ENCODE measurements at regions of chr6 and their contacts with region 1.

Region 1: GRCh38 chr6:31907158-31907813 is 5.4 kb upstream of the ZBTB12 start:
- DNase-seq: no peak
- ATAC-seq: no peak
- H3K4me3 ChIP-seq: no peak overlapping the region
- H3K27ac ChIP-seq: no peak overlapping the region
- H3K4me1 ChIP-seq: peaks cover 39% of the 10 kb centered on the region
- H3K27me3 ChIP-seq: no peaks in the 10 kb centered on the region
- CTCF ChIP-seq: no peak

Region 2: DNA sequence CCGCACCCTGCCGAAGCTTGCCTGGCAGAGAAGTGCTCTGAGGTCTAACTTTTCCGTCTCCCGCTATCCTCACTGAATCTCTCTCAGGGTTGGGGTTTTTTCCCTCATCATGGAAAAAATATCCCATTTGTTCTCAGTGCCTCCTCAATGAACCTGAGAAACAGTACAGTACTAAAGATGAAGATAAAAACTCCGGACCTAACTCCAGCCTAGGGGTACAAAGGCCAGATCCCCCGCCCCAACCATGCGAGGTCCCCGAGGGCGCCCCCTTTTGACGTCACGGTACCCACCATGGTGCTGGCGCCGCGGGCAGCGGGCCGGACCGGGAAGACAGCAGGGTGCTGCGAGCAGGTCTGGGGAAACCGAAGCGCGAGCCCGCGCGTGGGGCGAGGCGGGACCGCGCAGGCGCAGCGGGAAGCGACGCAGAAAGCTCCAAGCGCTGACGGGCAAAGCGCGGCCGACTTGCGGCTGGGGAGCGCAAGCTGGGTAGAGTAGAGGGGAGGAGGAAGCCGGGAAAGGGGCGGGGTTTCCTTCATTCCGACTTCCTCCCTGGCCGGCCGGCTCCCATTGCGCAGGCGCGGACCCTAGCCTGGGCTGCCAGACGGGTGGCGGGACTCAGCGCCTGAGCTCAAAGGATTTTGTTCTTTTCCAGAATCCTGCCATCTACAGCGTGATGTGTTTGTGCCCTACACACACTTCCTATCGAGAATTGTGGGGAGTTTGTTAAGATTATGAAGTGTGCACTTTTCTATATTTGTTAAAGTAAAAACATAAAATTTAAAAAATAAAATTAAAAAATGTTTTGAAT is 100.6 kb before region 1 on chr6 and contains the start of gene LSM2:
- CTCF ChIA-PET with region 1: no interaction called
- POLR2A ChIA-PET with region 1: no interaction called
- intact Hi-C with region 1: no loop called
- DNase-seq: peak; percentile 96
- ATAC-seq: peak; percentile 99
- H3K4me3 ChIP-seq: peak within 1 kb of the TSS; percentile 73
- H3K27ac ChIP-seq: peak within 1 kb of the TSS; percentile 53
- H3K4me1 ChIP-seq: peaks cover 6% of the 10 kb centered on the region
- H3K27me3 ChIP-seq: no peaks in the 10 kb centered on the region
- CTCF ChIP-seq: peak; percentile 55
- total RNA-seq, gene LSM2: 93.7 and 143 TPM in 2 replicates

Region 3: DNA sequence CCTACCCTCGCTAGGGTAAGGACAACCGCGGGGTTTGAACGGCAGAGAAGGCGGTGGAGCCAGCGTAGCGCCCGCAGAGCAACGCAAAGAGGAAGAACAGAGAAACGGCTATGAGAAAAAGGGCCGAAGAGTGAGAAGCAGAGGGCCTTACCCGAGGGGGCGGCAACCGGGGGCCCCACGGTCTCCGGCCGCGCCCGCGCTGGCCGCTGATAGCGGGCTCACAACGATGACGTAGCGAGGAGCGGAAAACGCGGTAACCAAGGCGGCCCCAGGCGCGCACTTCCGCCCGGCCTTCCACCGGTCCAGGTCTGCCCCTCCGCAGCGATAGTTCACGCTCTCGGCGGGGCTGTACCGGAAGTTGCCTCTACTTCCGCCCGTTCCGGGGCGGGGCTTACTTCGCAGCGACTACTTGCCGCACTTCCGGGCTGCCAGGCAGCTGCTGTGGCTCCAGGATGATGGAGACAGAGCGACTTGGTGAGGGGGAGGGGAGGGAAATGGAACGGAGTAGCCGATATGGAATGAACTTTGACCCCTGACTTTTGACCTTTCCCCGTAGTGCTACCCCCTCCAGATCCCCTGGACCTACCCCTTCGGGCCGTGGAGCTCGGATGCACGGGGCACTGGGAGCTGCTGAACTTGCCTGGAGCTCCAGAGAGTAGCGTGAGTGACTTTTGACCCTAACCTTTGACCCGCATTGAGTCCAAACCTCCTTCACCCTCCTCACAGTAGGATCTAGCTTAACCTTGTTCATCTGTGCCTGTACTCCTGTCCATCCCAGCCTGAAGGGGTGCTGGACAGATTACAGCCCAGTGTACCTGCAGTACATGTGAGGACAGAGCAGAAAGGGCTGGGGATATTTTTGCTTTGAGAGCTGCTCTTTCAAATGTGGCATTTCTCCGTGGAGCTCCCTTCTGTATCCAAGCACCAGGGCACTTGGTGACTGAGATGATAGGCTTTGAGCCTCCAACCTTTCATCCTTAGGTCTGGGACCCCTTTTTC is 51.8 kb after region 1 on chr6 and contains the starts of genes NELFE and SKIC2:
- CTCF ChIA-PET with region 1: no interaction called
- POLR2A ChIA-PET with region 1: no interaction called
- intact Hi-C with region 1: loop called (anchors 2 kb)
- DNase-seq: peak; percentile 99
- ATAC-seq: peak; percentile 100
- H3K4me3 ChIP-seq: peak within 1 kb of the TSS; percentile 96
- H3K27ac ChIP-seq: peak within 1 kb of the TSS; percentile 31
- H3K4me1 ChIP-seq: peaks cover 19% of the 10 kb centered on the region
- H3K27me3 ChIP-seq: no peaks in the 10 kb centered on the region
- CTCF ChIP-seq: no peak
- total RNA-seq, gene NELFE: 132 and 142 TPM in 2 replicates
- total RNA-seq, gene SKIC2: 81.9 and 95.0 TPM in 2 replicates

Region 4: DNA sequence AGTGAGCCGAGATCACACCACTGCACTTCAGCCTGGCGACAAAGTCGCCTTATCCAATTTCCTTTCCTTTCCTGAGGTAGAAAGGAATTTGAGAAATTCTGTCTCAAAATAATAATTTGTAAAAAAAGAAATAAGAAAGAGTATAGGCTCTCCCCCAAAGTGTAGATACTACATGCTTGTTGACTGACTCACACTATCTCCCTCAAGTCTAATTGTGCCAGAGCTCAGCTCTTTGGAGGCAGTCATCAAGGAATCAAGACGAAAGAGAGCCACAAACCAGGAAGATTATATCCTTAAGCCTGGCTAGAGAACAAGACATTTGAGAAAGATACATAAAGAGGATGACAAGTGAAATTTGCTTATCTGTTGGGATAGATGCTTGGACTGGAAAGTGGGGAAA is 226.5 kb after region 1 on chr6:
- CTCF ChIA-PET with region 1: interaction called, 17 read pairs
- POLR2A ChIA-PET with region 1: no interaction called
- intact Hi-C with region 1: no loop called
- DNase-seq: no peak
- ATAC-seq: no peak
- H3K4me3 ChIP-seq: no peak overlapping the region
- H3K27ac ChIP-seq: no peak overlapping the region
- H3K4me1 ChIP-seq: peaks cover 6% of the 10 kb centered on the region
- H3K27me3 ChIP-seq: no peaks in the 10 kb centered on the region
- CTCF ChIP-seq: no peak

Region 5: GRCh38 chr6:32609731-32610640 is 702.7 kb after region 1 on chr6:
- CTCF ChIA-PET with region 1: no interaction called
- POLR2A ChIA-PET with region 1: interaction called, 10 read pairs
- intact Hi-C with region 1: no loop called
- DNase-seq: peak; percentile 98
- ATAC-seq: peak; percentile 100
- H3K4me3 ChIP-seq: peak overlapping the region; percentile 38; the same call in 1 of the 2 replicates
- H3K27ac ChIP-seq: no peak overlapping the region
- H3K4me1 ChIP-seq: no peaks in the 10 kb centered on the region; the same call in 1 of the 2 replicates
- H3K27me3 ChIP-seq: 0 out of 2 replicates have a peak, but pooled peaks cover 6% of the 10 kb centered on the region
- CTCF ChIP-seq: no peak